ENCODE measurements at regions of chr3 and their contacts with region 1.

Region 1: DNA sequence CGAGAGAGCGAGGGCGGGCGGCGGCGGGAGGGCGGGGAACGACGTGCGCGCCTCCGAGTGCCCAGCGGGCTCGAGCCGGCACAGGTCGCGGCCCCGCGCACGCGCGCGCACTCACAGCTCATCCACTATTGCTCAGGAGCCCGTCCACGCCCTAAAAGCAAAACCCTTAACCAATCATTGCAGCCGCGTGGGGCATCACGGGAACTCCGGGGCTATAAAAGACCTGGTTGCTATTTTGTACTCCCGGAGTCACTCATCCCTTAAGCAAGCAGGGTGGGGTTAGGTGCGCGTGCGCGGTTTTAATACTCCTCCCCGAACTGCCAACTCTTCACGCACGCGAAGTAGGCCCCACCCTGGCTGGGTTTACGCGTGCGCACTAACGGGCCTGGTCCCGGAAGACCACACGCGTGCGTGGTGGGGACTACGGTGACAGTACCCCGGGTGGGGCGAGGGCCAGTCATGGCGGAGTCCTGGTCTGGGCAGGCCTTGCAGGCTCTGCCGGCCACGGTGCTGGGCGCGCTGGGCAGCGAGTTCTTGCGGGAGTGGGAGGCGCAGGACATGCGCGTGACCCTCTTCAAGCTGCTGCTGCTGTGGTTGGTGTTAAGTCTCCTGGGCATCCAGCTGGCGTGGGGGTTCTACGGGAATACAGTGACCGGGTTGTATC is at the starts of genes RHOA and TCTA:
- DNase-seq: peak; percentile 95
- ATAC-seq: peak; percentile 82
- H3K4me3 Mint-ChIP-seq: peak within 1 kb of the TSS; percentile 92
- H3K27ac Mint-ChIP-seq: peak within 1 kb of the TSS; percentile 92
- H3K4me1 Mint-ChIP-seq: peaks cover 79% of the 10 kb centered on the region
- H3K27me3 Mint-ChIP-seq: no peaks in the 10 kb centered on the region
- CTCF ChIP-seq: no peak
- total RNA-seq, gene RHOA: 399 and 425 TPM in 2 replicates
- total RNA-seq, gene TCTA: 26.4 and 32.2 TPM in 2 replicates

Region 2: DNA sequence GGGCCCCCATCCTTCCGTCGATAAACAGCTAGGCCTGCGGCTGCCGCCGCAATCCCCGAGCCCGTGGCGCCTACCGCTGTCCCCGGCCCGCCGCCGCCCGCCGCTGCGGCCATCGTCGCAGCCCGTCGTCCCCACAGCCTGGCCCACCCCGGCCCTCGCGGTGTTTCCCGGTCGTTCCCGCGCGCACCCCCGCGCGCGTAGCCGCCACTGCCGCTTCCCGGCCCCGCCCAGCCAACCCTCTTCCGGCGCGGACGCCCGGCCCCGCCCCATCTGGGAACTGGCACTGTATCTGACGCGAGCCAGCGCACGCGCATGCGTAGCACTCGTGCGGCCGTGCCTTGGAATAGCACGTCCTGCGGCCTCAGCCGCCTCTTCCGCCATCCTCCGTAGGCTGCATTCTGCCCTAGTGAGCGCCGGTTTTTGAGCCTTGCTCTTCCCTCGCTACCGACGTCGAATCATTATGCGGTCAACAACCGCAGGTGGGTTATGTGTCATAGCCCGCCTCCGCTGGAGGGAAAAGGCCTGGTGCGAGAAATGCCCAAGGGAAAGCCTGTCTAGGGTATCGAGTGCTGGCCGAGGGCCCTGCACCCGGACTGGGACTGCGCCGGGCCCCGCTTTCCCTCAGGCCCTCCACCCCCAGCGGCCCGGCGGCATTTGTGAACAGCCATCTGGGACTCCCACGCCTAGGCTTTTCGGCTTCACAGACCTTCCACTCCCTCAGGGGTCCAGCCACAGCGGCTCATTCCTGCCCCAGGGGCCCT is 1630.2 kb before region 1 on chr3 and contains the start of gene SMARCC1:
- CTCF ChIA-PET with region 1: no interaction called
- POLR2A ChIA-PET with region 1: no interaction called
- intact Hi-C with region 1: loop called (anchors 5 kb)
- DNase-seq: peak; percentile 98
- ATAC-seq: peak; percentile 84
- H3K4me3 Mint-ChIP-seq: peak within 1 kb of the TSS; percentile 93
- H3K27ac Mint-ChIP-seq: peak within 1 kb of the TSS; percentile 98
- H3K4me1 Mint-ChIP-seq: peaks cover 47% of the 10 kb centered on the region
- H3K27me3 Mint-ChIP-seq: no peaks in the 10 kb centered on the region
- CTCF ChIP-seq: no peak
- total RNA-seq, gene SMARCC1: 136 and 144 TPM in 2 replicates

Region 3: DNA sequence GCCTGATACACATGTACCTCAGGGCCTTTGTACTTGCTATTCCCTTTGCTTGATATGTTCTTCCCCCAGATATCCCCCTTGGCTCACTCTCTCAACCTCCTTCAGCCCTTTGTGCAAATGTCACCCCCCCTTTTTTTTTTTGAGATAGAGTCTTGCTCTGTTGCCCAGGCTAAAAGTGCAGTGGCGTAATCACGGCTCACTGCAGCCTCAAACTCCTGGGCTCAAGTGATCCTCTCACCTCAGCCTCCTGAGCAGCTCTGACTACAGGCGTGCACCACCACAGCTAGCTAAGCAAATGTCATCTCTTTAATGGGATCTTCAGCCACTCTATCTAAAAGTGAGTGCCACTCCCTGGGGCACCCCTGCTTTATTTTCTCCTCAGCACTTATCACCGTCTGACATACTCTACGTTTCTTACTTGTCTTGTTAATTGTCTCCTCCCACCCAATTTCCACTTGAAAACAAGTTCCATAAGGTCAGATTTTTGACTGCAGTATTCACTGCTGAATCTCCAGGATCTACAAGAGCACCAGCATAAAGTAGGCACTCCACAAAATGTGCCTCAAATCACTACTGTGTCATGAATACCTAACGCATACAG is 709.7 kb before region 1 on chr3:
- CTCF ChIA-PET with region 1: no interaction called
- POLR2A ChIA-PET with region 1: no interaction called
- intact Hi-C with region 1: no loop called
- DNase-seq: no peak
- ATAC-seq: no peak
- H3K4me3 Mint-ChIP-seq: no peak overlapping the region
- H3K27ac Mint-ChIP-seq: no peak overlapping the region
- H3K4me1 Mint-ChIP-seq: peaks cover 15% of the 10 kb centered on the region
- H3K27me3 Mint-ChIP-seq: no peaks in the 10 kb centered on the region
- CTCF ChIP-seq: no peak

Region 4: DNA sequence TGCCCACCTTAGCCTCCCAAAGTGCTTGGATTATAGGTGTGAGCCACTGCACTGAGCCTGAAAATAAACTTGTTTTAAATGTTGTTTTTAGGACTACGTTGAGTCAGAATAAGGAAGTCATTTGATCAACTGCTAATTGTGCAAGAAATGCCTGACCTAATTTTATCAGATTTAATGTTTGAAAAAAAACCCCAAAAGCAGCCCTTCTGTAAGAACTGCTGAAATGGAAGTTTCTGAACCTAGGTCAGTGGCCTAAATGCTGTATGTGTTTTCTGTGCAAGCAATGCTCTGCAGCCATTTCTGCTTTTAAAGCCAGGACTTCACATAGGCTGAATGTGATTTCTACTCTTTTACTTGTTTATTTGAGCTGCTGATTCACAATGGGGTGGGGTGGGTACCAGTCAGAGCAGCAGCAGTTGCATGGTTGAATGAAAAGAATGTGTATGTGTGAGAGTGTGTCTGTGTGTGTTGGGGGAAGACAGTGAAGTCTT is 60.5 kb before region 1 on chr3:
- CTCF ChIA-PET with region 1: interaction called, 4 read pairs
- POLR2A ChIA-PET with region 1: interaction called, 23 read pairs
- intact Hi-C with region 1: no loop called
- DNase-seq: no peak
- ATAC-seq: peak; percentile 56
- H3K4me3 Mint-ChIP-seq: peak overlapping the region; percentile 28
- H3K27ac Mint-ChIP-seq: peak overlapping the region; percentile 79
- H3K4me1 Mint-ChIP-seq: peaks cover 47% of the 10 kb centered on the region
- H3K27me3 Mint-ChIP-seq: no peaks in the 10 kb centered on the region
- CTCF ChIP-seq: no peak

Region 5: GRCh38 chr3:49397470-49397869 is 14.6 kb before region 1 on chr3:
- CTCF ChIA-PET with region 1: no interaction called
- POLR2A ChIA-PET with region 1: interaction called, 9 read pairs
- intact Hi-C with region 1: loop called (anchors 1 kb)
- DNase-seq: no peak
- ATAC-seq: peak; percentile 84
- H3K4me3 Mint-ChIP-seq: no peak overlapping the region
- H3K27ac Mint-ChIP-seq: peak overlapping the region; percentile 19
- H3K4me1 Mint-ChIP-seq: peaks cover 78% of the 10 kb centered on the region
- H3K27me3 Mint-ChIP-seq: no peaks in the 10 kb centered on the region
- CTCF ChIP-seq: no peak

Region 6: DNA sequence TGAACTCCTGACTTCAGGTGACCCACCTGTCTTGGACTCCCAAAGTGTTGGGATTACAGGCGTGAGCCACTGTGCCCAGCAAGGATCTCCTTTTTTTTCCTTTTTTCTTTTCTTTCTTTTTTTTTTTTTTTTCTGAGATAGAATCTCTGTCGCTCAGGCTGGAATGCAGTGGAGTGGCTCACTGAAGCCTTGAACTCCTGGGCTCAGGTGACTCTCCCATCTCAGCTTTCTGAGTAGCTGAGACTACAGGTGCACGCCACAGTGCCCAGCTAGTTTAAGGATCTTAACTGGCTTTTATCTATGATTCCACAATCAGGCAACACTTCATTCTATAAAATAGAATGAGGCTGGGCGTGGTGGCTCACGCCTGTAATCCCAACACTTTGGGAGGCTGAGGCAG is 33.3 kb after region 1 on chr3:
- CTCF ChIA-PET with region 1: interaction called, 22 read pairs
- POLR2A ChIA-PET with region 1: interaction called, 24 read pairs
- intact Hi-C with region 1: loop called (anchors 1 kb)
- DNase-seq: no peak
- ATAC-seq: no peak
- H3K4me3 Mint-ChIP-seq: no peak overlapping the region
- H3K27ac Mint-ChIP-seq: peak overlapping the region; percentile 35
- H3K4me1 Mint-ChIP-seq: peaks cover 22% of the 10 kb centered on the region
- H3K27me3 Mint-ChIP-seq: no peaks in the 10 kb centered on the region
- CTCF ChIP-seq: no peak

Region 7: GRCh38 chr3:49469936-49470713 is 58.0 kb after region 1 on chr3 and contains the start of gene DAG1:
- CTCF ChIA-PET with region 1: no interaction called
- POLR2A ChIA-PET with region 1: interaction called, 13 read pairs
- intact Hi-C with region 1: loop called (anchors 1 kb)
- DNase-seq: peak; percentile 97
- ATAC-seq: peak; percentile 87
- H3K4me3 Mint-ChIP-seq: peak within 1 kb of the TSS; percentile 91
- H3K27ac Mint-ChIP-seq: peak within 1 kb of the TSS; percentile 96
- H3K4me1 Mint-ChIP-seq: peaks cover 26% of the 10 kb centered on the region
- H3K27me3 Mint-ChIP-seq: no peaks in the 10 kb centered on the region
- CTCF ChIP-seq: no peak
- total RNA-seq, gene DAG1: 18.5 and 19.7 TPM in 2 replicates

Region 8: DNA sequence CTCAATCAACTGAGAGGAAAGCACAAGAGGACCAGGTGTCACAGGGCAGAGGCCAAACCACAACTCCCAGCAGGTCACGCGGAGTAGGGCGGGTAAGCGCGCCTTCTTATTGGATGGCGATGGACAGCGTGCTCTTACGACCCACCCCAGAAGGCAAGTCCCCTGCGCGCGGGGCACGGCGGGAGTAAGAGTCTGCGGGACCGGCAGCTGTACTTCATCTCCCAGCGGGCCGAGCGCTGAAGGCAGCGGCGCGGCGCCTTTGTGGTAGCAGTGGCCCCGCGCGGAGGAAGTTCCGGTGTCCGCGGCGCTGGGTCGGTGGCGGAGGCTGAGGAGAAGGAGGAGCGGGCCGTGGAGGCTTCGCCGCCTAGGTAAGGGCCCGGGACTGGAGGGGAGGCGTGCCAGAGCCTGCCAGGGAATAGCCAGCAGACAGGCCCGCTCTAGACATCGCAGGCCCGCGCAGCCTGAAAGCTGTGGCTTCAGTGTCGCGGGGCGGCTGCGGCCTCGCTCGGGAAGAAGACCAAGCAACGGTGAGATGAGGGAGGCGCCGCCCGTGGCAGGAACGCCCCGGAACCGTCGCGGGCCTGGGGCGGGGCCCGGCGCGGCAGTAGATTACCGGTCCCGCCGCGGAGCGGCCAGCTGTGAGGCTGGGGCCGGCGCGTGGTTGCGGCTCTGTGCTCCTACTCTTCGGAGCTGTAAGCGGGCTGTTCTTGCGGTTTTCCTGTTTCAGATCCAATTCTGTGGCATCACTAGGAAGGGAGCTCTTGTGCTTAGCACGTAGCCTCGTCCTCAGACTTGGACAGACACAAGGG is 528.0 kb after region 1 on chr3 and contains the start of gene RBM6:
- CTCF ChIA-PET with region 1: no interaction called
- POLR2A ChIA-PET with region 1: interaction called, 3 read pairs
- intact Hi-C with region 1: loop called (anchors 10 kb)
- DNase-seq: peak; percentile 89
- ATAC-seq: peak; percentile 93
- H3K4me3 Mint-ChIP-seq: peak within 1 kb of the TSS; percentile 98
- H3K27ac Mint-ChIP-seq: peak within 1 kb of the TSS; percentile 97
- H3K4me1 Mint-ChIP-seq: peaks cover 43% of the 10 kb centered on the region
- H3K27me3 Mint-ChIP-seq: no peaks in the 10 kb centered on the region
- CTCF ChIP-seq: no peak
- total RNA-seq, gene RBM6: 160 and 172 TPM in 2 replicates